ENCODE measurements at regions of chr2 and their contacts with region 1.

Region 1: DNA sequence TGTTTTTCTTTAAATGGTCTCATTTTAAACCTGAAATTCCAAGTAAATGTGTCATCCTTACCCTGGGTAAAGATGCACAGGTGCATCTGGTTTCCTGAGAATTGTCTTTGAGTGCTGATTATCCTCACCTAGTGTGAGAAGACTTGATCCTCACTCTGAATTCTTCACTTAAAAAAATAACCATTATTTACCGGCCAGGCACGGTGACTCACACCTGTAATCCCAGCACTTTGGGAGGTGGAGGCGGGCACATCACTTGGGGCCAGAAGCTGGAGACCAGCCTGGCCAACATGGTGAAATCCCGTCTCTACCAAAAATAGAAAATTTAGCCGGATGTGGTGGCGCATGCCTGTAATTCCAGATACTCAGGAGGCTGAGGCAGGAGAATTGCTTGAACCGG is 9.9 kb upstream of the WNT6 start:
- DNase-seq: peak in 1 of 42 donors; percentile 13

Region 2: DNA sequence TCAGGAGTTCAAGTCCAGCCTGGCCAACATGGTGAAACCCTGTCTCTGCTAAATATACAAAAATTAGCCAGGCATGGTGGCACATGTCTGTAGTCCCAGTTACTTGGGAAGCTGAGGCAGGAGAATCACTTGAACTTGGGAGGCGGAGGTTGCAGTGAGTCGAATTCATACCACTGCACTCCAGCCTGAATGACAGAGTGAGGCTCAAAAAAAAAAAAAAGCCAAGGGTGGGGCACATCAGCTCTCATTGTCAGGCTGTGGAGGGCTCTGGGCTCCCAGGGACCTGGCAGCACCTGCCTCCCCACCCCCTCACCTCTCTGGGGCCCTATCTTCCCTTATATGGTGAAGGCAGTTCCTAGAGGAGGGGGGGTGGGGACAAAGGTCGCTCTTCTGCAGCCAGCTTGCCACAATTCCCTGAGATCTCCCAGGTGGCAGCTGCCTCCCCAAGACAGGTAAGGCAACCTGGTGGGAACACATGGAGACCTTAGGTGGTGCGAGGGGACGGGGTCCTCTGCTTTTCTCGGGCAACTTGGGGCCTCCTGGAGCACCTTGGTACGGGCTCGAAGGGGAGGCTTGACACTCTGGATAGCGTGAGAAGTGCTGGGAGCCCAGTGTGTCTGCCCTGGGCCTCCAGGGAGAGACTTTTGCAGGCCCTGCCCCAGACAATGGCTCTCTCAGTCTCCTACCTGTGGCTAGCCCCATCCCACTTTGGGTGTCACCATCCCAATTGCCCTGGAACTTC is 430.8 kb before region 1 on chr2 and contains the start of gene VIL1:
- intact Hi-C with region 1: loop called (anchors 10 kb)
- DNase-seq: no peak

Measured in head of caudate nucleus (tissue), 42 donors.